Esophagus muscularis mucosa (tissue), 4 donors: ENCODE measurements at regions of chr6 and their contacts with region 1.

Region 1: GRCh38 chr6:47097092-47097945 is 55.2 kb upstream of the ADGRF1 start:
- DNase-seq: no peak
- H3K4me3 ChIP-seq: no peak overlapping the region
- H3K27ac ChIP-seq: peak overlapping the region in 2 of 4 donors; percentile 5 to 24
- H3K4me1 ChIP-seq: peaks cover 14 to 40% (median 22%) of the 10 kb centered on the region in 4 donors
- H3K27me3 ChIP-seq: no peaks in the 10 kb centered on the region
- CTCF ChIP-seq: peak; percentile 61 to 78 (median 77)
- EP300 ChIP-seq: no peak
- POLR2A ChIP-seq: no peak

Region 2: GRCh38 chr6:46925563-46926253 is 171.6 kb before region 1 on chr6:
- intact Hi-C with region 1: no loop called
- DNase-seq: no peak
- H3K4me3 ChIP-seq: no peak overlapping the region
- H3K27ac ChIP-seq: peak overlapping the region in 2 of 4 donors; percentile 22 to 31
- H3K4me1 ChIP-seq: peaks cover 0 to 11% (median 5%) of the 10 kb centered on the region in 4 donors
- H3K27me3 ChIP-seq: no peaks in the 10 kb centered on the region
- CTCF ChIP-seq: no peak
- EP300 ChIP-seq: no peak
- POLR2A ChIP-seq: no peak

Region 3: GRCh38 chr6:47016261-47016660 is 81.1 kb before region 1 on chr6:
- intact Hi-C with region 1: no loop called
- DNase-seq: peak; percentile 53
- H3K4me3 ChIP-seq: no peak overlapping the region
- H3K27ac ChIP-seq: no peak overlapping the region
- H3K4me1 ChIP-seq: no peaks in the 10 kb centered on the region
- H3K27me3 ChIP-seq: no peaks in the 10 kb centered on the region
- CTCF ChIP-seq: no peak
- EP300 ChIP-seq: no peak
- POLR2A ChIP-seq: no peak

Region 4: GRCh38 chr6:47247227-47247797 is 150.0 kb after region 1 on chr6:
- intact Hi-C with region 1: loop called (anchors 5 kb)
- DNase-seq: no peak
- H3K4me3 ChIP-seq: no peak overlapping the region
- H3K27ac ChIP-seq: peak overlapping the region in 2 of 4 donors; percentile 43
- H3K4me1 ChIP-seq: peaks cover 30 to 47% (median 43%) of the 10 kb centered on the region in 4 donors
- H3K27me3 ChIP-seq: no peaks in the 10 kb centered on the region
- CTCF ChIP-seq: no peak
- EP300 ChIP-seq: no peak
- POLR2A ChIP-seq: no peak

Region 5: GRCh38 chr6:47603995-47604394 is 506.7 kb after region 1 on chr6:
- intact Hi-C with region 1: no loop called
- DNase-seq: no peak
- H3K4me3 ChIP-seq: no peak overlapping the region
- H3K27ac ChIP-seq: no peak overlapping the region
- H3K4me1 ChIP-seq: no peaks in the 10 kb centered on the region
- H3K27me3 ChIP-seq: no peaks in the 10 kb centered on the region
- CTCF ChIP-seq: no peak
- EP300 ChIP-seq: no peak
- POLR2A ChIP-seq: no peak